MCF 10A (cell line): ENCODE measurements at regions of chr1 and their contacts with region 1.

Region 1: GRCh38 chr1:169893494-169894362 is at the start of gene SCYL3:
- DNase-seq: peak; percentile 99
- H3K4me3 Mint-ChIP-seq: peak within 1 kb of the TSS; percentile 83
- H3K27ac Mint-ChIP-seq: peak within 1 kb of the TSS; percentile 100
- H3K4me1 Mint-ChIP-seq: peaks cover 32% of the 10 kb centered on the region
- H3K27me3 Mint-ChIP-seq: no peaks in the 10 kb centered on the region
- CTCF ChIP-seq: no peak
- total RNA-seq, gene SCYL3: 7.4 and 9.3 TPM in 2 replicates

Region 2: DNA sequence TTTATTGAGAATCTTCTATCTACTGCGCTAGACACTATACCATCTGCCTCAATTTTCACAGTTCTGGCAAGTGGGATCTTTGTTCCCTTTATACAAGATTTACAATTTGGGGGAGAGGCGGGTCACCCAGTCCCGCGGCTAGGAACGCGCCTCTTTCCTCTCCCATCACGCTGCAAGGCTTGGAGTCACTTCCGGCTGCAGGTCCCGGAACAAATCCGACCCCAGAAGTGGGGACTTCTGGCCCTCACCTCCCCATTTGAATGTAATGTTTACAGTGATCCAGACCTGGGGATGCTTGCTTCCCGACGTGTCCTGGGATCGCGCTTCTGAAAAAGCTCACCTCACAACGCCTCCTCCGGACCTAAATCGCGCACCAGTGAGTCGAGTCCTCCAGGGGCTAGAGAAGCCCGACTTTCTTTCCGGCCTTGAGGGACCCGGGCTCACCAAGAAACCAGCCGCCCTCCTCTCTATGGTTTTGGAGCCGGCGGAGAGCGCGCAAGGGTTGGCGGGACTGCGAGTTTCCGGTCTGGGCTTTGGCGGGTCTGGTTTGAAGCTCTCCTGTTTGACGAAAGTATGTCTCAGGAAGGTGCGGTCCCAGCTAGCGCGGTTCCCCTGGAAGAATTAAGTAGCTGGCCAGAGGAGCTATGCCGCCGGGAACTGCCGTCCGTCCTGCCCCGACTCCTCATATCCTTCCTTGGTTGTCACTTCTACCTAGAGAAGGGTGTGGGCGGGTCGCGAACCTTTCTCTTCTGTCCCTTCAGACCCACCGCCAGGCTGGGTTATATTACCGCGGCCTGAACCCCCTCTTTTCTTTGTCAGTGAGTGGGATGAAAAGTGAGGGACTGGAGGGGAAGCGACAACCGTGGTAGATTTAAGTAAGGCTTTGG is 99.0 kb before region 1 on chr1 and contains the start of gene METTL18:
- CTCF ChIA-PET with region 1: interaction called, 4 read pairs
- POLR2A ChIA-PET with region 1: interaction called, 65 read pairs
- intact Hi-C with region 1: loop called (anchors 2 kb)
- DNase-seq: peak; percentile 98
- H3K4me3 Mint-ChIP-seq: peak within 1 kb of the TSS; percentile 100
- H3K27ac Mint-ChIP-seq: peak within 1 kb of the TSS; percentile 99
- H3K4me1 Mint-ChIP-seq: peaks cover 10% of the 10 kb centered on the region
- H3K27me3 Mint-ChIP-seq: no peaks in the 10 kb centered on the region
- CTCF ChIP-seq: peak; percentile 53
- total RNA-seq, gene METTL18: 2.8 and 4.1 TPM in 2 replicates

Region 3: GRCh38 chr1:169921080-169921479 is 27.4 kb after region 1 on chr1:
- CTCF ChIA-PET with region 1: interaction called, 3 read pairs
- POLR2A ChIA-PET with region 1: interaction called, 12 read pairs
- intact Hi-C with region 1: no loop called
- DNase-seq: no peak
- H3K4me3 Mint-ChIP-seq: no peak overlapping the region
- H3K27ac Mint-ChIP-seq: no peak overlapping the region
- H3K4me1 Mint-ChIP-seq: peaks cover 1% of the 10 kb centered on the region
- H3K27me3 Mint-ChIP-seq: no peaks in the 10 kb centered on the region
- CTCF ChIP-seq: no peak

Region 4: DNA sequence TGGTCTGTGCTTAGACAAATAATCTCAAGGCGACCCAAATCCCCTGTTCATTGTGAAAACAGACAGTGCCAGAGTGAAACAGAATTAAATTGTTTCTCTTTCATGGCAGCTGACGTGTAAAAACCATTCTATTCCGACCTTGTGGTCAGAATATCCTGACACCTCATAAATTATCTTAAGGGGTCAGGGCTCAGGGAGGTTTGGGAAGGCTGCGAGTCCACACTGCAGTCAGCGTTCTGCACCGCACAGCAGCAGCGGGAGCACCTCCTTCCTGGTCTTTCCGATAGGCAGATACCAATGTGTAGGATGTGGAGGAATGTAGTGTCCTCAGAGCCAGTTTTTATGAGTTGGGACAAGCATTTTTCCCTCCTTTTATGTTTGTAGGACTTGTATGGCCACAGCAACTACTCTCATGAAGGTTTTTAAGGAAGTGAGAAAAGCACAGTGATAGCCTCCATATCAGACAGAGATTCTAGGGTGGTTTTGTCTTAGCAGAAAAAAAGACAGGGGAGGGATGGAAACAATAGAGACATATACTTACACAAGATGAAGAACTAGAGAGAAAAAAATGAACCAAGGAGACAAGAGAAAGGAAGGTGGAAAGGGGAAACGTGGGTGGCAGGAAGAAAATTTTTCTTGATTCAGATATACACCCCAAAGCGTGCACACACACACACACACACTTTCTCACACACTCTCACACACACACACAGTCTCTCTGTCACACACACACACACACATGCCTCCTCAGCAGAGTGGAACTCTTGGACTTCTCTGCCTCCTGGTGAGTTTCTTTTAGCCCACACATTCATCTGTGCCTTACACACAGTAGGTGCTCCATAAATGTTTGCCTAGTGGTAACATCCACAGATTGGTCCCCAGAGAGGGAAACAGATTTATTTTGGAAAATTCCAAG is 320.6 kb after region 1 on chr1:
- CTCF ChIA-PET with region 1: no interaction called
- POLR2A ChIA-PET with region 1: no interaction called
- intact Hi-C with region 1: no loop called
- DNase-seq: no peak
- H3K4me3 Mint-ChIP-seq: no peak overlapping the region
- H3K27ac Mint-ChIP-seq: no peak overlapping the region
- H3K4me1 Mint-ChIP-seq: no peaks in the 10 kb centered on the region
- H3K27me3 Mint-ChIP-seq: no peaks in the 10 kb centered on the region
- CTCF ChIP-seq: no peak